PC-3 (cell line): ENCODE measurements at regions of chr4 and their contacts with region 1.

Region 1: GRCh38 chr4:180148737-180149136 is 2094.5 kb upstream of the TENM3 start:
- DNase-seq: no peak
- ATAC-seq: no peak
- H3K4me3 ChIP-seq: no peak overlapping the region
- H3K27ac ChIP-seq: no peak overlapping the region
- H3K4me1 ChIP-seq: no peaks in the 10 kb centered on the region
- H3K27me3 ChIP-seq: no peaks in the 10 kb centered on the region
- CTCF ChIP-seq: no peak

Region 2: DNA sequence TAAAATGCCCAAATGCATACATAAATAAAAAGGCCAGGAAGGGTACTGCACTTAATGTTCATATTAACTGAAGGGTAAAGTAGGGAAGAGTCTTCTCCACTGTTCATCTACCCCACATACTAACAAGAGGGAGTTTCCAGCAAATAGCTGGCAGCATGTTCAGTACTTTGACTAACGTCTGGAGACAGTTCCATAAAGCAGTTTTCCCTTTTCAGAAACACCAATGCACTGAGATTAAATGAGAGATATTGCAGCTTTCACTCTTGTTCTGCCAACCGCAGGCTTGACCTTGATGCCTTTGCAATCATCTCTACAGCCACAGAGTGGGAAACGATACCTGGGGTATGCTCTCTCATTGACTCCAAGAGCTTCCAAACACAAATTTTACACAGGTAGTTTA is 28.7 kb before region 1 on chr4:
- CTCF ChIA-PET with region 1: no interaction called
- POLR2A ChIA-PET with region 1: no interaction called
- intact Hi-C with region 1: loop called (anchors 2 kb)
- DNase-seq: no peak
- ATAC-seq: no peak
- H3K4me3 ChIP-seq: no peak overlapping the region
- H3K27ac ChIP-seq: no peak overlapping the region
- H3K4me1 ChIP-seq: no peaks in the 10 kb centered on the region
- H3K27me3 ChIP-seq: no peaks in the 10 kb centered on the region
- CTCF ChIP-seq: no peak

Region 3: GRCh38 chr4:180486342-180486741 is 337.6 kb after region 1 on chr4:
- CTCF ChIA-PET with region 1: no interaction called
- POLR2A ChIA-PET with region 1: no interaction called
- intact Hi-C with region 1: no loop called
- DNase-seq: no peak
- ATAC-seq: no peak
- H3K4me3 ChIP-seq: no peak overlapping the region
- H3K27ac ChIP-seq: no peak overlapping the region
- H3K4me1 ChIP-seq: no peaks in the 10 kb centered on the region
- H3K27me3 ChIP-seq: no peaks in the 10 kb centered on the region
- CTCF ChIP-seq: no peak